ENCODE measurements at regions of chr17 and their contacts with region 1.

Region 1: DNA sequence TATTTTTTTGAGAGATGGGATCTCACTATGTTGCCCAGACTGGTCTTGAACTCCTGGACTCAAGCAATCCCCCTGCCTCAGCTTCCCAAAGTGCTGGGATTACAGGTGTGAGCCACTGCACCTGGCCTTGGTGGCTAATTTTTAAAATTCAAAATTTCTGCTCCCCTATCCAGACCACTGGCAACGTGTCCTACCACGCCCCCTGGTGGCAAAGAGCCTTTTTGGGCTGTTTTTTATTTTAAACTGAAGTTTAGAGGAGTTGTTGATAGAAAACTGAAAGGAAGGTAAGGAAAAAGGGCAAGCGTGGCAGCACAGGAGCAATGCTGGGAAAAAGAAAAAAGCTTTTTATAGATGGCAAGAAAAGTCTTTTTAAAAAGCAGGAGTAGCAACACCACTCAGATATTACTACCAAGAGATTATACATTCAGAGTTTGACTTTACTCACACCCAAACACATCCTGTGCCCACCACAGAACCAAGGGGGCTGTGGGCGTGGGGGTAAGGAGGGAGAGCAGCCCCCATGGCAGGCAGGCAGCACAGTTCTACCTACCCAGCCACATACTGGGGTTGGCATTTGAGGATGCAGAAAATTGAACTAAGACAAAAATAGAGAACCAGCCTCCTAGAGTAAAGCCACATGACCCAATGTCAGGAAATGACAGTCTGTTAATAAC is 4.2 kb upstream of the MXRA7 start:
- DNase-seq: peak; percentile 83
- H3K4me3 ChIP-seq: no peak overlapping the region
- H3K27ac ChIP-seq: peak overlapping the region; percentile 33
- H3K4me1 ChIP-seq: peaks cover 6% of the 10 kb centered on the region
- H3K27me3 ChIP-seq: no peaks in the 10 kb centered on the region
- CTCF ChIP-seq: peak; percentile 78

Region 2: GRCh38 chr17:76557368-76558197 is 157.4 kb before region 1 on chr17:
- intact Hi-C with region 1: loop called (anchors 10 kb)
- DNase-seq: peak; percentile 96
- H3K4me3 ChIP-seq: peak overlapping the region; percentile 83
- H3K27ac ChIP-seq: peak overlapping the region; percentile 81
- H3K4me1 ChIP-seq: peaks cover 6% of the 10 kb centered on the region
- H3K27me3 ChIP-seq: no peaks in the 10 kb centered on the region
- CTCF ChIP-seq: peak; percentile 31

Measured in colonic mucosa (tissue), 4 donors.